Activated naive CD4-positive, alpha-beta T cell treated with anti-CD3 and anti-CD28 coated beads for 36 hours (primary cell): ENCODE measurements at regions of chr19 and their contacts with region 1.

Region 1: GRCh38 chr19:48899781-48900476 is at the start of gene NUCB1:
- DNase-seq: peak; percentile 100
- H3K4me3 Mint-ChIP-seq: peak within 1 kb of the TSS; percentile 97
- H3K27ac Mint-ChIP-seq: peak within 1 kb of the TSS; percentile 96
- H3K4me1 Mint-ChIP-seq: peaks cover 38% of the 10 kb centered on the region
- H3K27me3 Mint-ChIP-seq: peaks cover 5% of the 10 kb centered on the region
- total RNA-seq, gene NUCB1: 172 to 182 TPM

Region 2: DNA sequence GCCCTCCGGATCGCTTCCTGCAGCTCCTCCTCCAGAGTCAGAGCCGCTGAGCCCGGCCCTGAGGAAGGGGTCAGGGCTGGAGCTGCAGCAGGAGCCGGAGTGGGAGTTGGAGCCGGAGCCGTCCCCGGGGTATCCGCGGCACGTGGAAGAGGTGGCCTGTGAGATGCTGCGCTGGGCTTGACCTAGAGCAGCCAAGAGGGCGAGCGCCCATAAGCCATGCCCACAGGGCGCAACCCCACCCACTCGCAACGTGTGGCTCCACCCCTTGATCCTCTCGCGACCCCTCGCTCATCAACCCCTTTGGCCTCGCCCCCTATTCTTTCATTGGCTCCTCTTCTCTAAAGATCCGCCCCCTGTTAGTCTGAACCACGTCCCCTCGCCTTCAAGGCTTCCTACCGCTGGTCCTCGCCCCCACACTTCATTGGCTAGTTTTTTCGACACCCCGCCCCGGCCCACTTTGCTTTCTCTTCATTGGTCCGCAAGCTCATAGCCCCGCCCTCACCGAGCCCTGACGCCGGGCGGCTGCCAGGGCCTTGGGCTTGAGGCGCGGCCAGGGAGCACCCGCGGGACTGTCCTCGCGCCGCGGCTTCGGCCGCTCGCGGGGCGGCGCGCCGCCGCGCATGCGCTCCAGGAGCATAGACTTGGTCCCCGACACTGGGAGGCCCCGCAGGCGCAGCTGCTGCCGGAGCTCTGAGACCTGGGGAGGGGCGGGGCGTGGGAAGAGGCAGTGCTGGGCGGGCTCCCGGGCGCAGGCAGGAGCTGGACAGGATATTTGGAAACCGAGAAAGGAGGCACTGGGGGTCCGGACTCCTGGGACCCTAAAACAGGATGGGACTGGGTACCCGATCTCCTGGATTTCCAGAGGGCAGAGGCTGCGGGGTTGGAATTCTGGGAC is 185.8 kb before region 1 on chr19:
- CTCF ChIA-PET with region 1: no interaction called
- intact Hi-C with region 1: loop called (anchors 1 kb)
- DNase-seq: peak; percentile 99
- H3K4me3 Mint-ChIP-seq: peak overlapping the region; percentile 86
- H3K27ac Mint-ChIP-seq: peak overlapping the region; percentile 58
- H3K4me1 Mint-ChIP-seq: peaks cover 11% of the 10 kb centered on the region
- H3K27me3 Mint-ChIP-seq: no peaks in the 10 kb centered on the region

Region 3: GRCh38 chr19:48858984-48859710 is 40.8 kb before region 1 on chr19:
- CTCF ChIA-PET with region 1: interaction called, 3 read pairs
- intact Hi-C with region 1: loop called (anchors 1 kb)
- DNase-seq: peak; percentile 93
- H3K4me3 Mint-ChIP-seq: peak overlapping the region; percentile 95
- H3K27ac Mint-ChIP-seq: peak overlapping the region; percentile 85
- H3K4me1 Mint-ChIP-seq: peaks cover 4% of the 10 kb centered on the region
- H3K27me3 Mint-ChIP-seq: no peaks in the 10 kb centered on the region

Region 4: GRCh38 chr19:48918801-48919247 is 18.9 kb after region 1 on chr19:
- CTCF ChIA-PET with region 1: no interaction called
- intact Hi-C with region 1: no loop called
- DNase-seq: peak; percentile 40
- H3K4me3 Mint-ChIP-seq: no peak overlapping the region
- H3K27ac Mint-ChIP-seq: no peak overlapping the region
- H3K4me1 Mint-ChIP-seq: no peaks in the 10 kb centered on the region
- H3K27me3 Mint-ChIP-seq: no peaks in the 10 kb centered on the region

Region 5: GRCh38 chr19:48933382-48933932 is 33.5 kb after region 1 on chr19 and contains the start of gene DHDH:
- CTCF ChIA-PET with region 1: no interaction called
- intact Hi-C with region 1: loop called (anchors 2 kb)
- DNase-seq: peak; percentile 91
- H3K4me3 Mint-ChIP-seq: peak within 1 kb of the TSS; percentile 83
- H3K27ac Mint-ChIP-seq: peak within 1 kb of the TSS; percentile 4
- H3K4me1 Mint-ChIP-seq: peaks cover 7% of the 10 kb centered on the region
- H3K27me3 Mint-ChIP-seq: no peaks in the 10 kb centered on the region
- total RNA-seq, gene DHDH: 4.2 to 4.5 TPM

Region 6: DNA sequence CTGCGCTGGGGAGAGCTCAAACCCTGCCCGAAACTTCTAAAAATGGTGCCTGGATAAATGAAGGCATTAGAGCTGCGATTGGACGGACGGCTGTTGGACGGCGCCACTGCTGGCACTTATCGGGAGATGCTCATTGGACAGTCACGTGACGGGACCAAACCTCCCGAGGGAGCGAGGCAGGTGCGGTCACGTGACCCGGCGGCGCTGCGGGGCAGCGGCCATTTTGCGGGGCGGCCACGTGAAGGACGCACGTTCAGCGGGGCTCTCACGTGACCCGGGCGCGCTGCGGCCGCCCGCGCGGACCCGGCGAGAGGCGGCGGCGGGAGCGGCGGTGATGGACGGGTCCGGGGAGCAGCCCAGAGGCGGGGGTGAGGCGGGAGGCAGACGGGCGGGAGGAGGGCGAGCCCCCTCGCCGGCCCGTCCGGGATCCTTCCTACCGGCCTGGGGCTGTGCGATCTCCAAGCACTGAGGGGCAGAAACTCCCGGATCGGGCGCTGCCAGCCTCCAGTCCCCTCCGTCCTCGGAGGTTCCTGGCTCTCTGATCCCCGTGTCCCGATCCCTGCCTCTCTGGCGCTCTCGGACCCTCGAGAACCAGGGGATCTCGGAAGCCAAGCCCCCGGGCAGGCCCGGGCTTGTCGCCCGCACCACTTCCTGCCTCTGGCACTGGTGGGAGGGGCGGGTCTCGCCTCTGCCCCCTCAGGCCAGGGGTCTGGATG is 54.8 kb after region 1 on chr19 and contains the start of gene BAX:
- CTCF ChIA-PET with region 1: interaction called, 4 read pairs
- intact Hi-C with region 1: loop called (anchors 2 kb)
- DNase-seq: peak; percentile 98
- H3K4me3 Mint-ChIP-seq: peak within 1 kb of the TSS; percentile 77
- H3K27ac Mint-ChIP-seq: peak within 1 kb of the TSS; percentile 89
- H3K4me1 Mint-ChIP-seq: peaks cover 29% of the 10 kb centered on the region
- H3K27me3 Mint-ChIP-seq: no peaks in the 10 kb centered on the region
- total RNA-seq, gene BAX: 267 to 302 TPM

Region 7: GRCh38 chr19:49085020-49085867 is 185.3 kb after region 1 on chr19 and contains the start of gene SNRNP70:
- CTCF ChIA-PET with region 1: no interaction called
- intact Hi-C with region 1: loop called (anchors 1 kb)
- DNase-seq: peak; percentile 99
- H3K4me3 Mint-ChIP-seq: peak within 1 kb of the TSS; percentile 96
- H3K27ac Mint-ChIP-seq: peak within 1 kb of the TSS; percentile 93
- H3K4me1 Mint-ChIP-seq: peaks cover 31% of the 10 kb centered on the region
- H3K27me3 Mint-ChIP-seq: no peaks in the 10 kb centered on the region
- total RNA-seq, gene SNRNP70: 163 to 166 TPM